Mammary epithelial cell (primary cell): ENCODE measurements at regions of chr5 and their contacts with region 1.

Region 1: DNA sequence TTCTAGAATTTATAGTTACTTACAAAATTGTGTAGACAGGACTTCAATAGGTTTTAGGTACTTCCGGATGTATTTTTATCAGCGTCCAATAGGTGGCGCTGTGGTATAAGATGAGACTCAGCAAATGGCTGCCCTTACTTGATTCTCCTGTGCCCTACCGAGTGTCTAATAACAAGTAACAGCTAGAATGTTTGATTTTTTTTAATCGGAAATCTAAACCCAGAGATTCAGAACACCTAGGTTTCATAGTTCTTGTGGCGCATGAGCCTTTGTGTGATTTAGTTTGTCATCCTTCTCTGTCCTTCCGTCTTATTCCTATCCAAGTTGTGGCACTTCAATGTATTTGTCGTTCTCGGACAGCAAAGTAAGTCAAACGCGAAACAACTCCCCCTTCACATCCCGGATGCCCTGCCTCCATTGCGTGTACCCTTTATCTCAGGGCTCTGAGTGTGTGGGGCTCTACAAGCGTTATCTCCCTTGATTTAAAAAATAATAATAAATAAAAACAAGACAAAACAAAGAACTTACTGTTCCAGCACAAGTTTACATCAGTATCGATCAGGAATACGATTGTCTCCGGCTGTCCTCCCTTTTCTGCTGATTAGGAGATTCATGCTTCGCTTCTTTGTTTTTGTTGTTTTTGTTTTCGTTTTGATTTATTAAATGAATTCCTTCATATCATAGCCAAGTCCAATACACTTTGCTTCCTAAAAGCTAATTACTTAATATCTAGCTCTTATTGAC is 50.7 kb upstream of the SLC30A5 start:
- DNase-seq: peak; percentile 71
- H3K4me3 ChIP-seq: no peak overlapping the region
- H3K27ac ChIP-seq: no peak overlapping the region
- H3K4me1 ChIP-seq: no peaks in the 10 kb centered on the region
- H3K27me3 ChIP-seq: no peaks in the 10 kb centered on the region
- CTCF ChIP-seq: peak; percentile 77 to 79

Region 2: DNA sequence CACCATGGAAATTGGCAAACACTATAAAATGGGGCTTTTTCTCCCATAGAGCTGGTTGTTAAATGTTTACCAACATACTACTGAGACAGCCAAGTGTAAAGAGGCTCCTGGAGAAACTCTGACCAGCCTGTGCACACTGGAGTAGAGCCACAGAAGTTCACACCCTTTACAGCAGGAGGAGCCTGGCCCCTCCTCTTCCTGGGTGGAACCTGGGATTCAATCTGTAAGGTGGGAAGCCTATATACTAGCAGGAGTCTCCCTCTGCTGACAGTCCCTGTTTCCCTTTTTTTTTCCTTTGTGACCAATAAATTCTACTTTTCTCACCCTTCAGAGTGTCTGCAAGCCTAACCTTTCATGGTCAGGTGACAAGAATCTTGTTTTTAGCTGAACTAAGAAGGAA is 40.3 kb after region 1 on chr5:
- CTCF ChIA-PET with region 1: interaction called, 5 read pairs
- dilution Hi-C with region 1: no loop called
- in situ Hi-C with region 1: no loop called
- intact Hi-C with region 1: loop called (anchors 2 kb)
- DNase-seq: peak; percentile 35
- H3K4me3 ChIP-seq: no peak overlapping the region
- H3K27ac ChIP-seq: no peak overlapping the region
- H3K4me1 ChIP-seq: peaks cover 6% of the 10 kb centered on the region
- H3K27me3 ChIP-seq: no peaks in the 10 kb centered on the region
- CTCF ChIP-seq: peak in 1 of 2 donors; percentile 32

Region 3: DNA sequence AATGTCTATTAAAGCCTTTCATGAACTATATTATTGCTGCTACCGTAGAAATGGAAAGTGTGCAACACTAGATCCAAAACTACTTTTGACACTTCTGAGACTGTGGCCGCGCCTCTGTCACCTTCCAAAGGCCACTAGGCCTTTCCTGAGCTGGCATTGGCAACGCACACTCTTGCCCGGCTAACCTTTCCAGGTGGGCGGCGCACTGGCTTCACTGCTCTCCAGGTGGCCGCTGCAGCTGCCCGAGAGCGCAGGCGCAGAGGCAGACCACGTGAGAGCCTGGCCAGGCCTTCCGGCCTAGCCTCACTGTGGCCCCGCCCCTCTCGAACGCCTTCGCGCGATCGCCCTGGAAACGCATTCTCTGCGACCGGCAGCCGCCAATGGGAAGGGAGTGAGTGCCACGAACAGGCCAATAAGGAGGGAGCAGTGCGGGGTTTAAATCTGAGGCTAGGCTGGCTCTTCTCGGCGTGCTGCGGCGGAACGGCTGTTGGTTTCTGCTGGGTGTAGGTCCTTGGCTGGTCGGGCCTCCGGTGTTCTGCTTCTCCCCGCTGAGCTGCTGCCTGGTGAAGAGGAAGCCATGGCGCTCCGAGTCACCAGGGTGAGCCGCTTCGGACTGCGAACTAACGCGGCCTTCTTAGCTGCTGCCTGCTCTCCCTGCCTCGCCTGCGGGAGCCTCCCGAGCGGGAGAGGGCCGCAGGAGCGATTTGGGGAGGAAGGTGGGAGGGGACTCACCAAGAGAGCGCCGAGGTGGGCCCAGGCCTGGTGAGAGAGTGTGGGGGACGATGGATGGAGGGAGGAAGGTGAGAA is 123.8 kb after region 1 on chr5 and contains the start of gene CCNB1:
- CTCF ChIA-PET with region 1: no interaction called
- dilution Hi-C with region 1: no loop called
- in situ Hi-C with region 1: no loop called
- intact Hi-C with region 1: no loop called
- DNase-seq: peak; percentile 98
- H3K4me3 ChIP-seq: peak within 1 kb of the TSS; percentile 74 to 87 (median 76)
- H3K27ac ChIP-seq: peak within 1 kb of the TSS; percentile 81
- H3K4me1 ChIP-seq: peaks cover 19% of the 10 kb centered on the region
- H3K27me3 ChIP-seq: no peaks in the 10 kb centered on the region
- CTCF ChIP-seq: no peak
- total RNA-seq, gene CCNB1: 22.5 to 151 TPM

Region 4: DNA sequence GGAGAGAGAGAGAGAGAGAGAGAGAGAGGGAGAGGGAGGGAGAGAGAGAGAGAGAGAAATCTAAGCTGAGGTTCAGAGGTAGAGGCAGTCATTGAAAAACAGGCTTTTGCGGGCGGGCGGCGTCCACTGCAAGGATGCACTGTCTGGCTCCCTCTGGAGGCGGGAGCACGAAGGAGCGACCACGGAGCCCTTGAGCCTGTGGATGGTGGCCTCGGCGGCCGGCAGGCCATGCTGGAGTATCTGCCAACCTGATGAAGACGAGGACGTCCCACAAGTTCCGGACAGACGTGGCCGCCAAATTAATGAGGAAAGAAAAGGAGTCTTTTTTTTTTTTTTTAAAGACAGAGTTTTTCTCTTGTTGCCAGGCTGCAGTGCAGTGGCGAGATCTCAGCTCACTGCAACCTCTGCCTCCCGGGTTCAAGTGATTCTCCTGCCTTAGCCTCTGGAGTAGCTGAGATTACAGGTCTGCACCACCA is 291.7 kb after region 1 on chr5:
- CTCF ChIA-PET with region 1: no interaction called
- dilution Hi-C with region 1: no loop called
- in situ Hi-C with region 1: no loop called
- intact Hi-C with region 1: loop called (anchors 1 kb)
- DNase-seq: peak; percentile 62
- H3K4me3 ChIP-seq: no peak overlapping the region
- H3K27ac ChIP-seq: no peak overlapping the region
- H3K4me1 ChIP-seq: peaks cover 15% of the 10 kb centered on the region
- H3K27me3 ChIP-seq: no peaks in the 10 kb centered on the region
- CTCF ChIP-seq: peak; percentile 68 to 85

Region 5: GRCh38 chr5:69369369-69370121 is 326.5 kb after region 1 on chr5 and contains the starts of genes AK6, RAD17 and TAF9:
- CTCF ChIA-PET with region 1: no interaction called
- dilution Hi-C with region 1: no loop called
- in situ Hi-C with region 1: no loop called
- intact Hi-C with region 1: loop called (anchors 2 kb)
- DNase-seq: peak; percentile 92
- H3K4me3 ChIP-seq: peak within 1 kb of the TSS; percentile 89 to 100 (median 99)
- H3K27ac ChIP-seq: peak within 1 kb of the TSS; percentile 91
- H3K4me1 ChIP-seq: peaks cover 4% of the 10 kb centered on the region
- H3K27me3 ChIP-seq: no peaks in the 10 kb centered on the region
- CTCF ChIP-seq: no peak
- total RNA-seq, gene AK6: 14.0 to 38.5 TPM
- total RNA-seq, gene RAD17: 21.5 to 23.3 TPM
- total RNA-seq, gene TAF9: 84.0 to 105 TPM